ENCODE measurements at regions of chr11 and their contacts with region 1.

Region 1: GRCh38 chr11:60970369-60970774 is 1.1 kb upstream of the CD6 start:
- DNase-seq: peak; percentile 90
- H3K4me3 Mint-ChIP-seq: peak overlapping the region; percentile 89
- H3K27ac Mint-ChIP-seq: peak overlapping the region; percentile 97
- H3K4me1 Mint-ChIP-seq: peaks cover 15% of the 10 kb centered on the region
- H3K27me3 Mint-ChIP-seq: no peaks in the 10 kb centered on the region

Region 2: DNA sequence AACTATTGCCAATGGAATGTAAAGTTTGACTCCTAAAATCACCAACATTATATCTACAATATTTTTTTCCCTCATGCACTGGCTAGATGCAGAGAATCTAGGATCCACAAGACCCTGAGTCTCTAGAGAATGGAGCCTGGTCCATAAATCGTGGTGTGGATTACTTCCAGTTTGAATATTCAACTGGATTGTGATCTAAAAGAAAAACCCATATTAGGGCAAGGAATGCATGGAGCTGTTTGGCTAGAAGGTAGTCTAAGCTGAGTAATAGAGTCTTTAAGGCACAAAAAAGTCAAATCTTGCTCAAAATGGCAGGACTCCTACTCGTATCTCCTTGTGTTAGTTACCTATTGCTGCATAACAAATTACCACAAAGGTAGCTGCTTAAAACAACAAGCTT is 550.4 kb before region 1 on chr11:
- CTCF ChIA-PET with region 1: no interaction called
- intact Hi-C with region 1: no loop called
- DNase-seq: no peak
- H3K4me3 Mint-ChIP-seq: no peak overlapping the region
- H3K27ac Mint-ChIP-seq: no peak overlapping the region
- H3K4me1 Mint-ChIP-seq: no peaks in the 10 kb centered on the region
- H3K27me3 Mint-ChIP-seq: peaks cover 12% of the 10 kb centered on the region

Region 3: DNA sequence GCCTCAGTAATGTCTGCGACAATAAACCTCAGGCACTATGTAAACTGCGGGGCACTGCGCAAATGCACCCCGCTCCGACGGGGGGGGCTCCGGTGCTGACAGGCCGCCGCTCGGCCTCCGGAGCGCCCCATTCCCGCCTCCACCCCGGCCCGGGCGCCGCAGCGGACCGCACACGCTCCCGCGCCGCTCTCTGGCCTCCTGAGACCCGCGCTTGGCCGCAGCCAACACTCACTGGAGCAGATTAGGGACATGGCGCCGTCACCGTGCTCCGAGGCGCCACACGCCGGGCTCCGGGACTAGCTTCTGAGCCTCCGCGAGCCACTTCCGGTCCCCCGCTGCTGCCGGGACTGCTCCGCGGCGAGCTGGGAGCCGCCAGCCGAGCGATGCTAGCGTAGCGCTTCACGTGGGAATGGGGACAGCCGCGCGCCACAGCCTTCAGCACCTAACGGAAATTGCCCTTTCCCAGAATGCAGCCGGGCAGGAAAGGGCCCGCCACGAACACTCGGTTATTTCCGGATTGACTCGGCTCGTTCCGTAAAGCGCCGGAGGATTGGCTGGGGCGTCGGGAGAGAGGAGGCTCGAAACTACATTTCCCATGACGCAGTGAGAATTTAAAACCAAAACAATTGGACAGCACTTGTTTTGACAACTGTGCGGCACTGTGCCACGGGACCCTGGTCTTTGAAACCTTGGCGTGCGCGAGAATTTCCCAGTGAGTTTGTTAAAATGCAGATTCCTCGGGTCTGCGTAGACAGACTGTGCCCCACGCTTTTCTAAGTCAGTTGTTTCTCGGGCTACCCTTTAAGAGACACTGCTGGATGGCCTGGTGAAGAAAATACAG is 64.0 kb before region 1 on chr11 and contains the start of gene PRPF19:
- CTCF ChIA-PET with region 1: interaction called, 4 read pairs
- intact Hi-C with region 1: loop called (anchors 1 kb)
- DNase-seq: peak; percentile 100
- H3K4me3 Mint-ChIP-seq: peak within 1 kb of the TSS; percentile 80
- H3K27ac Mint-ChIP-seq: peak within 1 kb of the TSS; percentile 92
- H3K4me1 Mint-ChIP-seq: peaks cover 40% of the 10 kb centered on the region
- H3K27me3 Mint-ChIP-seq: no peaks in the 10 kb centered on the region
- total RNA-seq, gene PRPF19: 108 to 119 TPM

Region 4: GRCh38 chr11:60992842-60993409 is 22.6 kb after region 1 on chr11:
- CTCF ChIA-PET with region 1: no interaction called
- intact Hi-C with region 1: loop called (anchors 1 kb)
- DNase-seq: no peak
- H3K4me3 Mint-ChIP-seq: peak overlapping the region; percentile 74
- H3K27ac Mint-ChIP-seq: peak overlapping the region; percentile 98
- H3K4me1 Mint-ChIP-seq: peaks cover 81% of the 10 kb centered on the region
- H3K27me3 Mint-ChIP-seq: no peaks in the 10 kb centered on the region

Region 5: DNA sequence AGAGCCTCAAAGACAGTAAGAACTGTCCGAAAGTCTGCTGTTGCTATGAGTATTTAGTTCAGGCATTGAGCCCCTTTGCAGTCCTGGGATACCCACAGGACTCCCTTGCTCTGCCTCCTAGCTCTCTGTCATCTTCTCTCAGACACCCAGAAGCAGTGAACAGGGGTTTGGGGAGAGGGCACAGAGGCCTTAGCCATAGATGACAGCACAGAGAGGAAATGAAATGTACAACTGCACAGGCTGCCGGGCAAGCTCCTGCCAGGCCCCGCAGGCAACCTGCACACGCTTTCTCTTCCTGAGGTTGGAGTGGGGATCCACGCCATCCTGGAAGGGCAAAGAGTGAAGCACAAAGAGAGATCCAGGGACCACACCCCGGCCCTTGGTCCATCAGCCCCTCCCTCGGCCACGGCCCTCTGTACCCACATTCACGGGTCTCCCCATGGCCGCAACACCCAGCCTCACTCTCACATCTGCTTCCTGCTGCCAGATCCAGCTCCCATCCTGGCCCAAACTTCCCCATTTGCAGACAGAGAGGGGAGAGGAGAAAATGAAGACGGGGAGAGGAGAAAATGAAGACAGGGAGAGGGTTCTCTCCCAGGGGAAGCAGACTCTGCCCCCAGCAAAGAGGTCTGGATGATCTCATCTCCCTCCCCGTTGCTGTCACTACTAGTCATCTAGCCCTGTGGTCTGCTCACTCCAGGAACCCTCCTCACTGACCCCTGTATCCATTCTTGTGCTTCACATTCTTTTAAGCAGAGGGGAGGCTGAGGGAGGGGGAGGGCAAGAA is 41.8 kb after region 1 on chr11:
- CTCF ChIA-PET with region 1: interaction called, 28 read pairs
- intact Hi-C with region 1: no loop called
- DNase-seq: no peak
- H3K4me3 Mint-ChIP-seq: no peak overlapping the region
- H3K27ac Mint-ChIP-seq: peak overlapping the region; percentile 84
- H3K4me1 Mint-ChIP-seq: peaks cover 66% of the 10 kb centered on the region
- H3K27me3 Mint-ChIP-seq: no peaks in the 10 kb centered on the region

Region 6: GRCh38 chr11:61041755-61042518 is 71.6 kb after region 1 on chr11:
- CTCF ChIA-PET with region 1: interaction called, 3 read pairs
- intact Hi-C with region 1: loop called (anchors 1 kb)
- DNase-seq: peak; percentile 93
- H3K4me3 Mint-ChIP-seq: peak overlapping the region; percentile 44
- H3K27ac Mint-ChIP-seq: peak overlapping the region; percentile 97
- H3K4me1 Mint-ChIP-seq: peaks cover 70% of the 10 kb centered on the region
- H3K27me3 Mint-ChIP-seq: no peaks in the 10 kb centered on the region

Region 7: DNA sequence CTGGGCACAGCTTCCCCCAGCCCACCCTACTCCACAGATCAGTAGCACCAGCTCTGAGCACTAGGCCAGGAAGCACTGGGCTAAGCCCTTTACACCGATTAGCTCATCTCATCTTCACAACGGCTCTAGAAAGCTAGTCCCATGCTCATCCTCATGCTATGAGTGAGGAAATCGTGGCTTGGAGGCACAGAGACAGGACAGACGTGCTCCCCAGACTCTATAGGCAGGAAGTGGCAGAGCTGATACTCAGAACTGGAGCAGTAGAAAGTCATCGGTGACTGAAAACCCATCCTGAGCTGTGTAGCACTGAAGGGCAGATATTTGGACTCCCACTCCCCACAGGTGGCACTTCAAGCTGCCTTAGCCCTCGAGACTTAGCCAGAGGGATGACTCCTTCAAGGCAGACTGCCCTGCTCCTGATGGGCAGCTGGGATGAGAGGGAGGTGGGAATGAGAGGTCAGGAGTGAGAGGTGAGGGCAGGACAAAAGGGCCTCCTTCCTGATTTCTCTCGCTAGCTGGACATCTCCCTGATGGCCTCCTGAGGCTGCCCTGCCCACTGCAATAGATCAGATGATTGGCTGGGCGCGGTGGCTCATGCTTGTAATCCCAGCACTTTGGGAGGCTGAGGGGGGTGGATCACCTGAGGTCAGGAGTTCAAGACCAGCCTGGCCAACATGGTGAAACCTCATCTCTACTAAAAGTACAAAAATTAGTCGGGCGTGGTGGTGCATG is 141.6 kb after region 1 on chr11:
- CTCF ChIA-PET with region 1: interaction called, 6 read pairs
- intact Hi-C with region 1: loop called (anchors 1 kb)
- DNase-seq: peak; percentile 91
- H3K4me3 Mint-ChIP-seq: peak overlapping the region; percentile 71
- H3K27ac Mint-ChIP-seq: no peak overlapping the region
- H3K4me1 Mint-ChIP-seq: peaks cover 99% of the 10 kb centered on the region
- H3K27me3 Mint-ChIP-seq: no peaks in the 10 kb centered on the region

Region 8: GRCh38 chr11:61187505-61188130 is 217.2 kb after region 1 on chr11:
- CTCF ChIA-PET with region 1: interaction called, 3 read pairs
- intact Hi-C with region 1: loop called (anchors 1 kb)
- DNase-seq: peak; percentile 90
- H3K4me3 Mint-ChIP-seq: no peak overlapping the region
- H3K27ac Mint-ChIP-seq: no peak overlapping the region
- H3K4me1 Mint-ChIP-seq: peaks cover 2% of the 10 kb centered on the region
- H3K27me3 Mint-ChIP-seq: no peaks in the 10 kb centered on the region

Measured in activated naive CD4-positive, alpha-beta T cell treated with anti-CD3 and anti-CD28 coated beads for 36 hours (primary cell).